T-cell (primary cell): ENCODE measurements at regions of chr16 and their contacts with region 1.

Region 1: DNA sequence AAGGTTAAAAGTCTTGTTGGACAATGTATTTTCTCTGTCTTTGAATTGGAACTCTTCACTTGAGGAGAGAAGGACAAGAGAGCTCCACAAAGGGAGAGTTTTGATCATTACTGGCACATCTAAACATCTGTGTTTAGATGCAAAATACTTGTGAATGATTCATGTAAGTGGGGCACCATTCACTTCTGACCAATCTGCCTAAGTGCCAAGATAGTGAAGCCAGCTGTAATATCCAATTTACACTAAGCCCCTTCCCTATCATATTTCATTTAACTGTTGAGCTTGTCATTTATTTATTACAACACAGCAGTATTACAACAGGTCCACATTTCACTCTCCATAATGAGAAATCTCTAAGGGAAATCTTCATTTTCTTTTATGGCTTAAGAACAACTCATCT is 832.3 kb upstream of the GOT2 start:
- DNase-seq: no peak
- ATAC-seq: no peak
- H3K4me3 ChIP-seq: no peak overlapping the region
- H3K4me3 Mint-ChIP-seq: no peak overlapping the region
- H3K27ac ChIP-seq: no peak overlapping the region
- H3K27ac Mint-ChIP-seq: no peak overlapping the region
- H3K4me1 ChIP-seq: no peaks in the 10 kb centered on the region
- H3K4me1 Mint-ChIP-seq: no peaks in the 10 kb centered on the region
- H3K27me3 ChIP-seq: no peaks in the 10 kb centered on the region
- H3K27me3 Mint-ChIP-seq: no peaks in the 10 kb centered on the region

Region 2: GRCh38 chr16:59351305-59351903 is 215.0 kb before region 1 on chr16:
- CTCF ChIA-PET with region 1: no interaction called
- POLR2A ChIA-PET with region 1: interaction called in 1 of 2 experiments, 11 read pairs
- DNase-seq: no peak
- ATAC-seq: no peak
- H3K4me3 ChIP-seq: no peak overlapping the region
- H3K4me3 Mint-ChIP-seq: no peak overlapping the region
- H3K27ac ChIP-seq: no peak overlapping the region
- H3K27ac Mint-ChIP-seq: no peak overlapping the region
- H3K4me1 ChIP-seq: no peaks in the 10 kb centered on the region
- H3K4me1 Mint-ChIP-seq: no peaks in the 10 kb centered on the region
- H3K27me3 ChIP-seq: no peaks in the 10 kb centered on the region
- H3K27me3 Mint-ChIP-seq: no peaks in the 10 kb centered on the region

Region 3: GRCh38 chr16:59440502-59440901 is 125.9 kb before region 1 on chr16:
- CTCF ChIA-PET with region 1: no interaction called
- POLR2A ChIA-PET with region 1: no interaction called
- DNase-seq: no peak
- ATAC-seq: no peak
- H3K4me3 ChIP-seq: no peak overlapping the region
- H3K4me3 Mint-ChIP-seq: no peak overlapping the region
- H3K27ac ChIP-seq: no peak overlapping the region
- H3K27ac Mint-ChIP-seq: no peak overlapping the region
- H3K4me1 ChIP-seq: no peaks in the 10 kb centered on the region
- H3K4me1 Mint-ChIP-seq: no peaks in the 10 kb centered on the region
- H3K27me3 ChIP-seq: no peaks in the 10 kb centered on the region
- H3K27me3 Mint-ChIP-seq: no peaks in the 10 kb centered on the region

Region 4: DNA sequence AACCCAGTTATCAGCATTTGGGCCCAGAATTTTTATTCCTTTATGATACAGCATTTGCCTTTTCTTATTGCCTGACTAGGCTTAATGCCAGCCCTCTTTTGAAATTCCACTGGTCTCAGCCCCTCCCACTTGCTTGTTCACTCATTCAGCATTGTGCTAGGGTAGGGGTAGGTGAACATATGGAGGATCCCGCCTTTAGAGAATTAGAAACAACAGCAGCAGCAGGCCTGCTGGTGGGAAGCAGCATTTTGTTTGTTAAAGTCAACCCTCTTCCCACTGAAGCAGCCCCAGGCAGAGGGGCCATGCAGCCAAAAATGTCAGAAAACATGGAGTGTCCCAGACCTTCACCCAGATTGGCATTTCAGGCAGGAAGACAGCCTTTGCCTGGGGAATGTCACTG is 1114.6 kb after region 1 on chr16:
- CTCF ChIA-PET with region 1: no interaction called
- POLR2A ChIA-PET with region 1: no interaction called
- DNase-seq: no peak
- ATAC-seq: no peak
- H3K4me3 ChIP-seq: no peak overlapping the region
- H3K4me3 Mint-ChIP-seq: no peak overlapping the region
- H3K27ac ChIP-seq: no peak overlapping the region
- H3K27ac Mint-ChIP-seq: no peak overlapping the region
- H3K4me1 ChIP-seq: no peaks in the 10 kb centered on the region
- H3K4me1 Mint-ChIP-seq: no peaks in the 10 kb centered on the region
- H3K27me3 ChIP-seq: no peaks in the 10 kb centered on the region
- H3K27me3 Mint-ChIP-seq: no peaks in the 10 kb centered on the region